ENCODE measurements at regions of chr1 and their contacts with region 1.

Region 1: DNA sequence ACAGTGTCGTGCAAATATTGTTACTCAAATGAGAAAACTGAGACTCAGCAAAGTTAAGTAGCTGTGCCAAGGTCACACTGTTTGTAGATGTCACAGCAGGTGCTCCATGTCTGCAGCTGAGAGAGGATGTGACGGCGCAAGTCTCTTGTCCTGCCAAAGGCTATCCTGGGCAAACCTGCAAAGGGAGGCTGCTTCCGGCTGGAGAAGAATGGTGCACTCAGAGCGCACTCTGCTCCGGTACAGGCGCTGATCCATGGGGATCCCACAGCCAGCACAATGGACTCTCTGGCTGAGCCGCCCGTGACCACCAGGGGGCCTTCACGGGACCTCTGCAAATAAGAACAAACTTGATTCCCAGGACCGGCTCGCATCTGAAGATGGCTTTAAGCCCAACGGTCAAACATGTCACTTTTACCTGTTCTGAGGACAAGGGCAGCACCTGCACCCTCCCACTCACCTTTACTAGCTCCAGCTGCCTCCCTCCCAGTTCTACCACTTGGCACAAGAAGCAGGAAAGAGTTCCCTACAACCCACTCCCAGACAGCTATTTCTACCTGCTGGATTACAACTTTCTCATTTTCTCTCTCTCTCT is 21.9 kb downstream of the RD3 start:
- DNase-seq: peak; percentile 96
- H3K4me3 ChIP-seq: no peak overlapping the region
- H3K27ac ChIP-seq: peak overlapping the region in 1 of 4 donors; percentile 4
- H3K4me1 ChIP-seq: peaks cover 8 to 37% (median 33%) of the 10 kb centered on the region in 4 donors
- H3K27me3 ChIP-seq: no peaks in the 10 kb centered on the region
- CTCF ChIP-seq: peak; percentile 75 to 92 (median 82)
- EP300 ChIP-seq: no peak
- POLR2A ChIP-seq: no peak

Region 2: GRCh38 chr1:210684466-210685294 is 785.4 kb before region 1 on chr1:
- intact Hi-C with region 1: no loop called
- DNase-seq: no peak
- H3K4me3 ChIP-seq: no peak overlapping the region
- H3K27ac ChIP-seq: no peak overlapping the region
- H3K4me1 ChIP-seq: peaks cover 0 to 8% (median 3%) of the 10 kb centered on the region in 4 donors
- H3K27me3 ChIP-seq: no peaks in the 10 kb centered on the region
- CTCF ChIP-seq: no peak
- EP300 ChIP-seq: no peak
- POLR2A ChIP-seq: no peak

Region 3: GRCh38 chr1:210866532-210866931 is 603.5 kb before region 1 on chr1:
- intact Hi-C with region 1: no loop called
- DNase-seq: no peak
- H3K4me3 ChIP-seq: no peak overlapping the region
- H3K27ac ChIP-seq: no peak overlapping the region
- H3K4me1 ChIP-seq: no peaks in the 10 kb centered on the region
- H3K27me3 ChIP-seq: no peaks in the 10 kb centered on the region
- CTCF ChIP-seq: no peak
- EP300 ChIP-seq: no peak
- POLR2A ChIP-seq: no peak

Region 4: GRCh38 chr1:211514030-211514754 is 44.2 kb after region 1 on chr1:
- intact Hi-C with region 1: loop called (anchors 2 kb)
- DNase-seq: no peak
- H3K4me3 ChIP-seq: no peak overlapping the region
- H3K27ac ChIP-seq: no peak overlapping the region
- H3K4me1 ChIP-seq: peaks cover 10 to 22% (median 18%) of the 10 kb centered on the region in 4 donors
- H3K27me3 ChIP-seq: no peaks in the 10 kb centered on the region
- CTCF ChIP-seq: peak; percentile 75 to 82 (median 76)
- EP300 ChIP-seq: no peak
- POLR2A ChIP-seq: no peak

Region 5: DNA sequence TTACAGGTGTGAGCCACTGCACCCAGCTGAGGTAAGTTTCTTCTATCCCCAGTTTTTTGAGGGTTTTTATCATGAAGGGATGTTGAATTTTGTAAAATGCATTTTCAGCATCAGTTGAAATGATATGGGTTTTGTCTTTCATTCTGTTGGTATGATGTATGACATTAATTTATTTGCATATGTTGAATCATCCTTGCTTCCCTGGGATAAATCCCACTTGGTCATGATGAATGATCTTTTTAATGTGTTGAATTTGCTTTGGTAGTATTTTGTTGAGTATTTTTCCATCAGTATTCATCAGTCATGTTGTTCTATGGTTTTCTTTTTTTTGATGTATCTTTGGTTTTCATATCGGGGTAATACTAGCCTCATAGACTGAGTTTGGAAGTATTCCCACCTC is 1722.0 kb after region 1 on chr1:
- intact Hi-C with region 1: no loop called
- DNase-seq: no peak
- H3K4me3 ChIP-seq: no peak overlapping the region
- H3K27ac ChIP-seq: no peak overlapping the region
- H3K4me1 ChIP-seq: no peaks in the 10 kb centered on the region
- H3K27me3 ChIP-seq: no peaks in the 10 kb centered on the region
- CTCF ChIP-seq: no peak
- EP300 ChIP-seq: no peak
- POLR2A ChIP-seq: no peak